ENCODE measurements at regions of chr6 and their contacts with region 1.

Region 1: GRCh38 chr6:111483736-111484632 is 966 bp upstream of the REV3L start:
- DNase-seq: peak; percentile 97
- ATAC-seq: peak; percentile 74
- H3K4me3 ChIP-seq: peak overlapping the region; percentile 88
- H3K27ac ChIP-seq: peak overlapping the region; percentile 96
- H3K4me1 ChIP-seq: peaks cover 5% of the 10 kb centered on the region
- H3K27me3 ChIP-seq: no peaks in the 10 kb centered on the region
- CTCF ChIP-seq: 0 out of 2 replicates have a peak, but pooled peaks have one; percentile 3
- POLR2A ChIP-seq: peak; percentile 97
- RAD21 ChIP-seq: no peak; the same call in 1 of the 2 replicates

Region 2: DNA sequence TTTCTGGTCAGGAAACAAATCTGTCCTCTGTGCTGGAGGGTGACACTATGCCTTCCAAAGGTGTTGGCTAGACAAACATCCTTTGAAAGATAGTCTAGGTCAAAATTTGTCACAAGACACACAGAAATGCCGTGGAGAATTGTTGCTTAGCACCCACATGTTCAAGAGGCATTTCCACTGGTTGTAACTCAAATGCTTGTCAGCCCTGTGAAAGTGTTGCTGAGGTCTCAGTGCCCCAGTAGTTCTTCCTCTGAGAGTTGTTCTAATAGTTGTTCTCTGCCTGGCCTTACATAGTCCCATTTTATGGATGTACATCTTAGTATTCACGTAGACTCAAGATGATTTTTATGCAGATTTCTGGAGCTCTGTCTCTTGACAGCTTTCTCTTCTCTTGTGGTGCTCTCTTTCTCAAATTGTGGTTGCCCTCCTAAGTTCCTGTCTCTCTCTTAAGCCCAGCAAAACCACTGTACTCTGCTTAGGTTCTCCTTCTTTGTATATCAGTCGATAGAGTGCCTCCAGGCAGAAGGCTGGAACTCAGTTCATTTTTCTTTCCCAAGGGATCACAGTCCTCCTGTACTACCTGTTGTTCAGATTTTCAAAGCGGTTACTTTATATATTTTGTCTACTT is 38.5 kb after region 1 on chr6:
- CTCF ChIA-PET with region 1: interaction called, 3 read pairs
- POLR2A ChIA-PET with region 1: no interaction called
- dilution Hi-C with region 1: no loop called
- in situ Hi-C with region 1: no loop called
- intact Hi-C with region 1: loop called (anchors 5 kb)
- DNase-seq: no peak
- ATAC-seq: no peak
- H3K4me3 ChIP-seq: no peak overlapping the region
- H3K27ac ChIP-seq: no peak overlapping the region
- H3K4me1 ChIP-seq: no peaks in the 10 kb centered on the region; the same call in 1 of the 2 replicates
- H3K27me3 ChIP-seq: no peaks in the 10 kb centered on the region
- CTCF ChIP-seq: no peak
- POLR2A ChIP-seq: no peak
- RAD21 ChIP-seq: no peak

Region 3: DNA sequence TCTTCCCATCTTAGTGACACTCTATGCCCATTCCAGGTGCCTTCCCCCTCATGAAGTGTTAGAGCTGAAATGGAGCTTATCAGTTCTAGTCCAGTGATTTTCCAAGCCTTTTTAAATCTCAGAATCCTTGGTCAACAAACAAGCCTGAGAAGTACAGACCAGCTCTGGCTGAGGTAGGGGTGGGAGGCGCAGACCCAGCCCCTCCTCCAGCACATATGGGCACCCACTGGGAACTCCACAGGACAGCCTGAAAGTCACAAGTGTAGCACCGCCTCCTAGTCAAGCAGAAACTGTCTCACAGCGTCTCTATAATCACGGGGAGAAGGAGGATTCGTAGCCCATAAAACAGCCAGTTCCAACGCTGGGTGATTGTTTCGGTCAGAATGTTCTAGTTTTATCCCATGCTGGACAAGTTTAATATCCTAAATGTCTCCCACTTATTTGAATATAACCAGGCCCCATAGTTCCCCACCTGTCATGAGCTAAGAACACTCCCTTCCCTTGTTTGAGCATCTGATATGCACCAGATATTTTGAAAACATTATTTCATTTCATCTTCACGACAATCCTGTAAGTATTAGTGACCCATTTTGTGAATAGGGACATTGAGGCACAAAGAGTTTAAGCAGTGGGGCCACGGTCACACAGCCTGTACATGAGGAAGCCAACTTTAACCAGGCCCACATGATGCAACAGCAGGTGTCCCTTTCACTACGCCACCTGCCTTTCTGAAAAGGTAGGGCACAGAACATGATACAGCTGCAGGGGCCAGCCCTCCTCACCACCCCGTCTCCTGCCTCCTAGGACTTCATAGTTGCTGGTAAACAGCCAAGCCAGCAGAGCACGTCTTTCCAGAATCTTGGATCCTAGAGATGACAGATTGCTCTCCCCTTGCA is 81.6 kb after region 1 on chr6:
- CTCF ChIA-PET with region 1: interaction called, 5 read pairs
- POLR2A ChIA-PET with region 1: no interaction called
- dilution Hi-C with region 1: no loop called
- in situ Hi-C with region 1: no loop called
- intact Hi-C with region 1: loop called (anchors 5 kb)
- DNase-seq: no peak
- ATAC-seq: no peak
- H3K4me3 ChIP-seq: no peak overlapping the region
- H3K27ac ChIP-seq: peak overlapping the region; percentile 69
- H3K4me1 ChIP-seq: peaks cover 28% of the 10 kb centered on the region
- H3K27me3 ChIP-seq: no peaks in the 10 kb centered on the region
- CTCF ChIP-seq: no peak
- POLR2A ChIP-seq: no peak
- RAD21 ChIP-seq: no peak

Region 4: GRCh38 chr6:111642463-111643158 is 158.6 kb after region 1 on chr6:
- CTCF ChIA-PET with region 1: no interaction called
- POLR2A ChIA-PET with region 1: no interaction called
- dilution Hi-C with region 1: no loop called
- in situ Hi-C with region 1: no loop called
- intact Hi-C with region 1: loop called (anchors 1 kb)
- DNase-seq: peak; percentile 66
- ATAC-seq: peak; percentile 90
- H3K4me3 ChIP-seq: no peak overlapping the region
- H3K27ac ChIP-seq: no peak overlapping the region
- H3K4me1 ChIP-seq: no peaks in the 10 kb centered on the region; the same call in none of the 2 replicates
- H3K27me3 ChIP-seq: no peaks in the 10 kb centered on the region
- CTCF ChIP-seq: peak; percentile 79
- POLR2A ChIP-seq: no peak
- RAD21 ChIP-seq: peak; percentile 90